ENCODE measurements at regions of chr7 and their contacts with region 1.

Region 1: GRCh38 chr7:129091484-129092002 is 36.6 kb upstream of the TNPO3 start:
- DNase-seq: peak; percentile 84 to 92
- H3K4me3 ChIP-seq: no peak overlapping the region
- H3K4me3 Mint-ChIP-seq: peak overlapping the region; percentile 24
- H3K27ac Mint-ChIP-seq: no peak overlapping the region
- H3K4me1 ChIP-seq: no peaks in the 10 kb centered on the region
- H3K4me1 Mint-ChIP-seq: peaks cover 9% of the 10 kb centered on the region
- H3K27me3 ChIP-seq: no peaks in the 10 kb centered on the region
- H3K27me3 Mint-ChIP-seq: peaks cover 8% of the 10 kb centered on the region
- CTCF ChIP-seq: peak; percentile 95 to 99

Region 2: DNA sequence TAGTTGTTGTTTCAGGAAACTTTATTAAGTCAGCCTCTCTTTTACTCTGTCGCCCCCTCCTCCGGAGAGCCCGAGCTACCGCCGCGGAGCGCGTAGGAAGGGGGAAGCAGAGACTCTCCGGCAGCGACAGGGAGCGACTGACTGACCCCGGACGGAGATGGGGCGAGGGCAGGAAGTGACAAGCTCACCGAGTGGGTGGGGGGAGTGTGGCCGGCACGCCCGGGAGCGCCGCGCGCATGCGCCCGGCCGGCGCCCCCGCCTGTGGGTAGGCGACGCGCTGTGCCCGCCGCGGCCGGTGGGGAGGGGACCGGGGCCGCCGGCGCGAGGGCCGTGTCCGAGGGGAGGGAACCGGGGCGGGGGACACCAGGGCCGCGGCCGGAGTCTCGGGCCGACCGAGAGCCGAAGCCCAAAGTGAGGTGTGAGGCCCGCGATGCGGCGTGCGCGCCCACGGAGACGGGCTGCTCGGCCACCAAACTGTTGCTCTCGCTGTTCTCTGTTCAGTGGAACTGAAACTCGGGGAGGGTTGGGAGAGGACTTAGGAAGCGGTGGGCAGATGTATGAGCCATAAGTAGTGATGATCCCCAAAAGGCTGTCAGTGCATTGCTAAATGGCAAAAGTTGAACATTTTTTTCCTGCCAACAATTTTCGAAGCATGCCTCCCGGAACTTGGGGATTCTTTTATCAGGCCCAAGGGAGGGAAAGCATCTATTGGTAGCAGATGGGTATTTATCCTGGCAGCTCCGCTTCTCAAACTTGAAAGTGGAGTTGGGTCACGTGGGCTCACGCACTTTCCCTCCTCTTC is 1698.8 kb before region 1 on chr7 and contains the start of gene ZNF800:
- CTCF ChIA-PET with region 1: no interaction called
- POLR2A ChIA-PET with region 1: no interaction called
- intact Hi-C with region 1: no loop called
- DNase-seq: peak; percentile 89 to 92
- H3K4me3 ChIP-seq: peak within 1 kb of the TSS; percentile 73
- H3K4me3 Mint-ChIP-seq: peak within 1 kb of the TSS; percentile 97
- H3K27ac Mint-ChIP-seq: peak within 1 kb of the TSS; percentile 93
- H3K4me1 ChIP-seq: no peaks in the 10 kb centered on the region
- H3K4me1 Mint-ChIP-seq: peaks cover 7% of the 10 kb centered on the region
- H3K27me3 ChIP-seq: no peaks in the 10 kb centered on the region
- H3K27me3 Mint-ChIP-seq: peaks cover 8% of the 10 kb centered on the region
- CTCF ChIP-seq: no peak
- total RNA-seq, gene ZNF800: 17.3 and 18.7 TPM in 2 replicates

Region 3: GRCh38 chr7:128904381-128905197 is 187.0 kb before region 1 on chr7:
- CTCF ChIA-PET with region 1: interaction called, 9 read pairs
- POLR2A ChIA-PET with region 1: no interaction called
- intact Hi-C with region 1: loop called (anchors 1 kb)
- DNase-seq: peak in 1 of 2 experiments; percentile 58
- H3K4me3 ChIP-seq: no peak overlapping the region
- H3K4me3 Mint-ChIP-seq: no peak overlapping the region
- H3K27ac Mint-ChIP-seq: no peak overlapping the region
- H3K4me1 ChIP-seq: no peaks in the 10 kb centered on the region
- H3K4me1 Mint-ChIP-seq: peaks cover 8% of the 10 kb centered on the region
- H3K27me3 ChIP-seq: no peaks in the 10 kb centered on the region
- H3K27me3 Mint-ChIP-seq: no peaks in the 10 kb centered on the region
- CTCF ChIP-seq: peak; percentile 56 to 62

Region 4: DNA sequence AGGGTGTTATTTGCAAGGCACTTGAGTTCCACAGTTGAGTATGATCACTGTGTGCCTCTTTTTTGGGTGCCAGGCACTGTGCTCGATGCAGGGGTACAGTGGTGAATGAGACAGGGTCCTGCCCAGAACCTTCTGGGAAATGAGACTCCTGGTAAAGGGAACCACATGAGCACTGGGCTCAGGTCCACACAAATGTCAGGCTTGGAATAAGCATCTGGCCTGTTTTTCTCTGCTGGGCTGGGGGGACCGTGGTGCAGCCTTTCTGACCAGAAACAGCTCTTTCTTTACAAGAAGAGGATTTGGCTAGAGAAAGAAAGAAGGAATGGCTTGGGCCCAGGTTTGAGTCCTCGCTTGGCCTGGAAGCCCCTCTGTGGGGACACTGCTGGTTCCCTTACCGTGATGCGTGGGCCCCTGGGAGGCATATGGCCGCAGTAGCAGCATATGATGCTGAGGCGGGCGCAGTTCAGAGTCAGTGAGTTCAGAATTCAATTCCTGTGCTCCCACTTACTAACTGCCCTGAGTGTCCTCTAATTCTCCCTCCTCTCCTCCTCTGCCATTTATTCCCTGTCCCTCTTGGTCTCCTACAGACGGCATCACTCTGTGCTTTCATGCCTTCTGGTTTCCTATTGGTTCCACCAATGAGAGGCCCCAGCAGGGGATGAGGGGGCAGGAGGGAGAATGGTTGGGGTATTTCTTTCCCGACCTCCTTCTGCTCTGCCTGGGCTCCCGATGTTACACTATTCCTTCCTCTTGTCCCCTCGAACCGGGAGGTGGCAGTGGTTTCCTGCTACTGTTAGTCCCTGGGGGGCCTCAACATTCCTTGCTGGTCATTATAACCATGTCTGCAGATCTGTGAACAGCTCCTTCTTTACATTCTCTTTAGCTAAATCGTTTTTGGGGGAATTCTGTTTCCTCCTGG is 171.4 kb before region 1 on chr7:
- CTCF ChIA-PET with region 1: interaction called, 4 read pairs
- POLR2A ChIA-PET with region 1: no interaction called
- intact Hi-C with region 1: loop called (anchors 1 kb)
- DNase-seq: peak in 1 of 2 experiments; percentile 36
- H3K4me3 ChIP-seq: no peak overlapping the region
- H3K4me3 Mint-ChIP-seq: no peak overlapping the region
- H3K27ac Mint-ChIP-seq: no peak overlapping the region
- H3K4me1 ChIP-seq: no peaks in the 10 kb centered on the region
- H3K4me1 Mint-ChIP-seq: peaks cover 7% of the 10 kb centered on the region
- H3K27me3 ChIP-seq: no peaks in the 10 kb centered on the region; the same call in 1 of the 2 replicates
- H3K27me3 Mint-ChIP-seq: peaks cover 18% of the 10 kb centered on the region
- CTCF ChIP-seq: peak in 1 of 2 experiments; percentile 37

Region 5: GRCh38 chr7:128985660-128986059 is 105.9 kb before region 1 on chr7:
- CTCF ChIA-PET with region 1: no interaction called
- POLR2A ChIA-PET with region 1: no interaction called
- intact Hi-C with region 1: no loop called
- DNase-seq: no peak
- H3K4me3 ChIP-seq: no peak overlapping the region
- H3K4me3 Mint-ChIP-seq: no peak overlapping the region
- H3K27ac Mint-ChIP-seq: no peak overlapping the region
- H3K4me1 ChIP-seq: no peaks in the 10 kb centered on the region
- H3K4me1 Mint-ChIP-seq: no peaks in the 10 kb centered on the region
- H3K27me3 ChIP-seq: no peaks in the 10 kb centered on the region
- H3K27me3 Mint-ChIP-seq: no peaks in the 10 kb centered on the region
- CTCF ChIP-seq: no peak

Region 6: DNA sequence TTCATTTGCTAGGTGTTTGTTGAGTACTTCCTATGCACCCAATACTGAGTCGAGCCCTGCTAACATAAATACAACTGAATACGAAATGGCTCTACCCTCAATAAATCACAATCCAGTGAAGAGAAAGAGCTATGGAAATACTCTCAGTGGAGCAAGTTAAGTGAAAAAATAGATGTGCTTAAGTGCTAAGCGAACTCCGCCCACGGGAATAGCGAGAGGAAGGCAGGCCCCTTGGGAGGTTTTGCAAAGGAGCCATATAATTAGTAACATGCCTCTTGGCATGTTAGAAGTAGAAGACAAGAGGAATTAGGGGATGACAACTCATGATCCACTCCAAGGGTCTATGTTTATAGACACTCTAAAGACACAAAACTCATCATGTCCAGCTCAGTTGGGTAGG is 10.2 kb after region 1 on chr7:
- CTCF ChIA-PET with region 1: interaction called, 14 read pairs
- POLR2A ChIA-PET with region 1: interaction called, 6 read pairs
- intact Hi-C with region 1: no loop called
- DNase-seq: no peak
- H3K4me3 ChIP-seq: no peak overlapping the region
- H3K4me3 Mint-ChIP-seq: no peak overlapping the region
- H3K27ac Mint-ChIP-seq: no peak overlapping the region
- H3K4me1 ChIP-seq: peaks cover 16% of the 10 kb centered on the region
- H3K4me1 Mint-ChIP-seq: peaks cover 10% of the 10 kb centered on the region
- H3K27me3 ChIP-seq: no peaks in the 10 kb centered on the region
- H3K27me3 Mint-ChIP-seq: peaks cover 7% of the 10 kb centered on the region
- CTCF ChIP-seq: no peak

Region 7: DNA sequence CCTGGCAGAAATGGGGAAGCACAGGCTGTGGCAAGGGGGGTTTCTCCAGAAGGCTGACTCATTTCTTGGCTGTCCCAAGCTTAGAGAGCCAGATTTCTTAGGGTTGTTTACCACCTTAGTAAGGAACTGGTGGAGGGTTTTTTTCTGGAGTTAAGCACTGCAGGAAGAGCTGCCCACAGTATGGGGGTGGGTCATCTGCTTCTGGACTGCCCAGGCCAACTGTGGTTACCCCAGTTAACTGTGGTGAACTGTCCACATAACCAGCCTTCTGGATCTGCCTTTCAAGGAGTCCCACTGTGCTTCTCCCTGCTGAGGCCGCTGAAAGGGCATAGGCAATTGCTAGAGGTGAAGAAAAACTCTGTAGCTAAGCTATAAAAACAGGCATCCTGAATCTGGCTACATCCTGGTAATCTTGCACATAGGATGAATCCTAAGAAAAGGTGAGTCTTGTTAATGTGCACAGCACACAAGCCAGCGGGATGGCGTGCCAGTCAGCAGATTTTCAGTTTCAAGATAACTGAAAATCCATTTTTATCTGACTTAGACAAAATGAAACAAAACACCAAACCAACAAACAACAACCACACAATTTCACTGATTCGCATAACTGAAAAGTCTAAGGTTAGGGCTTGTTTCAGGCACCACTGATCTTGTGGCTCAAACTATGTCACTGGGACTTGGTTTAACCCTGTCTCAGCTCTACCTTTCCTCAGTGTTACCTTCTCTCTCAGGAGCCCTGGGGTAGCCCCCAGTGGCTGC is 31.4 kb after region 1 on chr7:
- CTCF ChIA-PET with region 1: no interaction called
- POLR2A ChIA-PET with region 1: no interaction called
- intact Hi-C with region 1: no loop called
- DNase-seq: no peak
- H3K4me3 ChIP-seq: no peak overlapping the region
- H3K4me3 Mint-ChIP-seq: no peak overlapping the region
- H3K27ac Mint-ChIP-seq: no peak overlapping the region
- H3K4me1 ChIP-seq: no peaks in the 10 kb centered on the region
- H3K4me1 Mint-ChIP-seq: no peaks in the 10 kb centered on the region
- H3K27me3 ChIP-seq: no peaks in the 10 kb centered on the region
- H3K27me3 Mint-ChIP-seq: peaks cover 5% of the 10 kb centered on the region
- CTCF ChIP-seq: no peak

Region 8: DNA sequence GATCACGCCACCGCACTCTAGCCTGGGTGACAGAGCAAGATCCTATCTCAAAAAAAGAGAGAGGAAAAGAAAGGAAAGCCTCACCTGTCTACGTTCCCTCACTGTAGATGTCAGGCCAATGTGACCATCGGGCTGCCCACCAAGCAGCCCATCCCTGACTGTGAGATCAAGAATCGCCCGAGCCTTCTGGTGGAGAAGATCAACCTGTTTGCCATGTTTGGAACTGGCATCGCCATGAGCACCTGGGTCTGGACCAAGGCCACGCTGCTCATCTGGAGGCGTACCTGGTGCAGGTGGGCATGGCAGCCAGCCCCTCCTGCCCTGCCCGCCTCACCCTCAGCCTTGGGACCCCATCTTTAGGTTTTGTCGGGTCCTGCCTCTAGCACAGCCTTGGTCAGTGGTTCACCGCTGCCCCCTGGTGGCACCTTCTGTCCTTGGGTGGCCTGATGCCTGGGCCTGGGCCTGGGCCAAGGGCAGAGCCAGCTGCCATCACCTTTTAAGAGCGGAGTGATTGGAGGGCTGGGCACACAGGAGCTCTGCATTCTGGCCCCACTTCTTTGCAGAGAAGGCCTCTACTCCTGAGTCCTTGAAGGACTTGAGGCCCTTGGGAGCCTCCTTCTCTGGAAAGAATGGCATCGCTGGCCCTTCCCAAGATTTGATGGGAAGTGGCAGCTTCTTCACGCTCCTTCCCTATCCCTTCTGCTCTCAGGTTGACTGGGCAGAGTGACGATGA is 118.9 kb after region 1 on chr7:
- CTCF ChIA-PET with region 1: interaction called, 7 read pairs
- POLR2A ChIA-PET with region 1: no interaction called
- intact Hi-C with region 1: loop called (anchors 5 kb)
- DNase-seq: peak; percentile 71 to 83
- H3K4me3 ChIP-seq: no peak overlapping the region
- H3K4me3 Mint-ChIP-seq: no peak overlapping the region
- H3K27ac Mint-ChIP-seq: no peak overlapping the region
- H3K4me1 ChIP-seq: no peaks in the 10 kb centered on the region
- H3K4me1 Mint-ChIP-seq: no peaks in the 10 kb centered on the region
- H3K27me3 ChIP-seq: no peaks in the 10 kb centered on the region
- H3K27me3 Mint-ChIP-seq: no peaks in the 10 kb centered on the region
- CTCF ChIP-seq: peak; percentile 87 to 94

Measured in Caco-2 (cell line).